ENCODE measurements at regions of chr7 and their contacts with region 1.

Region 1: GRCh38 chr7:121395961-121396757 is at the start of gene FAM3C:
- DNase-seq: peak; percentile 87
- ATAC-seq: peak; percentile 87
- H3K4me3 Mint-ChIP-seq: peak within 1 kb of the TSS; percentile 85
- H3K27ac Mint-ChIP-seq: peak within 1 kb of the TSS; percentile 89
- H3K4me1 Mint-ChIP-seq: peaks cover 47% of the 10 kb centered on the region
- H3K27me3 Mint-ChIP-seq: no peaks in the 10 kb centered on the region
- total RNA-seq, gene FAM3C: 50.3 to 96.0 TPM

Region 2: DNA sequence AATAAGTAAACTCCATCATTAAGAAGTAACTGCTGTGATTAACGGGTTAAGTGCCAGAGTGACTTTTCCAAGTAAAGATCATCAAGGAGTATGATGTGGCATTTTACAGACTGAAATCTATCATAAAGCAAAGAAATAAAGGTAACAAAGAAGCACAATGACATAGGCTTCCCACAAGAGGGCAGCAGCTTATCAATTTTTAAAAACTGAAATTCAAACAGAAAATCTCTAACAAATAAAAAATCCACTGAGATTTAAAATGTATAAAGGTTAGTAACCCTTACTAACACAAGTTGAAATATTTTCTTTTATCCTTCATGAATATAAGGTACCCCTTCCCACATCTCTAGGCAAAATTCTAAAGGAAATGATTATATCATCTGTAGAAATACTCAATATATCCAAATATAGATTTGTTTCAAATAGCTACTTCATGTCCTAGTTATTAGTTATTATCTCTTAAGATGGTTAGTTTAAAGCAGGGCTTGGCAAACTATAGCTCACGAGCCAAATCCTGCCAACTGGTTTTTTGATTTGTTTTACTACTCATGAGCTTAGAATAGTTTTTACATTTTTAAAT is 29.2 kb before region 1 on chr7:
- CTCF ChIA-PET with region 1: interaction called, 104 read pairs
- DNase-seq: no peak
- ATAC-seq: no peak
- H3K4me3 Mint-ChIP-seq: no peak overlapping the region
- H3K27ac Mint-ChIP-seq: no peak overlapping the region
- H3K4me1 Mint-ChIP-seq: peaks cover 66% of the 10 kb centered on the region
- H3K27me3 Mint-ChIP-seq: no peaks in the 10 kb centered on the region

Region 3: GRCh38 chr7:121410829-121411596 is 14.9 kb after region 1 on chr7:
- CTCF ChIA-PET with region 1: interaction called, 29 read pairs
- DNase-seq: no peak
- ATAC-seq: peak; percentile 23
- H3K4me3 Mint-ChIP-seq: no peak overlapping the region
- H3K27ac Mint-ChIP-seq: no peak overlapping the region
- H3K4me1 Mint-ChIP-seq: peaks cover 21% of the 10 kb centered on the region
- H3K27me3 Mint-ChIP-seq: peaks cover 2% of the 10 kb centered on the region

Region 4: GRCh38 chr7:121440857-121441503 is 44.8 kb after region 1 on chr7:
- CTCF ChIA-PET with region 1: interaction called, 20 read pairs
- DNase-seq: no peak
- ATAC-seq: peak; percentile 37
- H3K4me3 Mint-ChIP-seq: peak overlapping the region; percentile 68
- H3K27ac Mint-ChIP-seq: peak overlapping the region; percentile 85
- H3K4me1 Mint-ChIP-seq: peaks cover 35% of the 10 kb centered on the region
- H3K27me3 Mint-ChIP-seq: no peaks in the 10 kb centered on the region

Region 5: GRCh38 chr7:121547544-121548092 is 151.5 kb after region 1 on chr7:
- CTCF ChIA-PET with region 1: interaction called, 30 read pairs
- DNase-seq: no peak
- ATAC-seq: peak; percentile 71
- H3K4me3 Mint-ChIP-seq: no peak overlapping the region
- H3K27ac Mint-ChIP-seq: no peak overlapping the region
- H3K4me1 Mint-ChIP-seq: peaks cover 46% of the 10 kb centered on the region
- H3K27me3 Mint-ChIP-seq: no peaks in the 10 kb centered on the region

Measured in activated CD8-positive, alpha-beta memory T cell treated with anti-CD3 and anti-CD28 coated beads, Interleukin-2, amount 10 ng/mL, durations not matched to agents 7 days and 5 days (primary cell).